ENCODE measurements at regions of chr5 and their contacts with region 1.

Region 1: DNA sequence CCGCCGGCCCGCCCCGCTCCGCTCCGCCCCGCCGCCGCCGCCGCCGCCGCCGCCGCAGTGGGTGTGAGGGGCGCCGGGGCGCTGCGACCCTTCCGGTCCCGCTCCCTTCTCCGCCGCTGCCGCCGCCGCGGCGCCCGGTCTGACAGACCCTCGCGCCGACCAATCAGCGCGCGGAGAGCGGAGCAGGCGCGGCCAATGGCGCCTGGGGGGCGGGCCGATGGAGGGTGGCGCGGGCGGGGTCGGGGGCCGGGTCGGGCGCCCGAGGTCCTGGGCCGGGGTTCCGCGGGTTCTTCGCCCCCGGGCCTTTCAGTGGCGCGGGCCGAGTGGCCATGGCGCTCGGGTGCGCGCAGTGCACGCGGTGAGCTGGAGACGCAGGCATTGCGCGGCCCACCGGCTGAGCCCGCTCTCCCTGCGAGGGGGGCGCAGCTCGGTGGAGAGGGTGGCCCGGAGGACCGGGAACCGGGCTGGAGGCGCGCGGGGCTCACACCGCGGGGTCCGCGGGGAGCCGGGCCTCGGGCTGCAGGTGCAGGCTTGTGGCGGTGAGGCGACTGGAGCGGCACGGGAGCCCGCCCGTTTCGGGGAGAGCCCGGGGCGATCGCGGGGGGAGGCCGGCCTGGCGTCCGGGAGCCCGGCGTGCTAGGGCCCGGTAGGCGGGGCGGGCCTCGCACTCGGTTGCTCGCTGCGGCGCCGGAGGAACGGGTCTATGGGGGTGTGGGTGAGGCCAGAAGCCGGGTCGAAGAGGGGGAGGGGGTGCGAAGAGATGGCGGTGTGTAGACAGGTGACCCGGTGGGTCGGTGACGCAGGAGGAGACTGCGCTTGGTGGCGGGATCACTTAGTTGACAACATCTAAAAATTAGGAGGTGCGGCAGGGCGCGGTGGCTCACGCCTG is at the start of gene MAPK9:
- DNase-seq: peak; percentile 83
- H3K4me3 Mint-ChIP-seq: peak within 1 kb of the TSS; percentile 94
- H3K27ac Mint-ChIP-seq: peak within 1 kb of the TSS; percentile 90
- H3K4me1 Mint-ChIP-seq: peaks cover 32% of the 10 kb centered on the region
- H3K27me3 Mint-ChIP-seq: no peaks in the 10 kb centered on the region
- total RNA-seq, gene MAPK9: 30.8 to 34.4 TPM

Region 2: GRCh38 chr5:179879010-179879689 is 413.0 kb before region 1 on chr5:
- CTCF ChIA-PET with region 1: no interaction called
- intact Hi-C with region 1: no loop called
- DNase-seq: no peak
- H3K4me3 Mint-ChIP-seq: no peak overlapping the region
- H3K27ac Mint-ChIP-seq: no peak overlapping the region
- H3K4me1 Mint-ChIP-seq: no peaks in the 10 kb centered on the region
- H3K27me3 Mint-ChIP-seq: no peaks in the 10 kb centered on the region

Region 3: GRCh38 chr5:180328296-180329137 is 36.3 kb after region 1 on chr5:
- CTCF ChIA-PET with region 1: interaction called, 48 read pairs
- intact Hi-C with region 1: loop called (anchors 1 kb)
- DNase-seq: peak; percentile 93
- H3K4me3 Mint-ChIP-seq: no peak overlapping the region
- H3K27ac Mint-ChIP-seq: no peak overlapping the region
- H3K4me1 Mint-ChIP-seq: no peaks in the 10 kb centered on the region
- H3K27me3 Mint-ChIP-seq: peaks cover 14% of the 10 kb centered on the region

Region 4: DNA sequence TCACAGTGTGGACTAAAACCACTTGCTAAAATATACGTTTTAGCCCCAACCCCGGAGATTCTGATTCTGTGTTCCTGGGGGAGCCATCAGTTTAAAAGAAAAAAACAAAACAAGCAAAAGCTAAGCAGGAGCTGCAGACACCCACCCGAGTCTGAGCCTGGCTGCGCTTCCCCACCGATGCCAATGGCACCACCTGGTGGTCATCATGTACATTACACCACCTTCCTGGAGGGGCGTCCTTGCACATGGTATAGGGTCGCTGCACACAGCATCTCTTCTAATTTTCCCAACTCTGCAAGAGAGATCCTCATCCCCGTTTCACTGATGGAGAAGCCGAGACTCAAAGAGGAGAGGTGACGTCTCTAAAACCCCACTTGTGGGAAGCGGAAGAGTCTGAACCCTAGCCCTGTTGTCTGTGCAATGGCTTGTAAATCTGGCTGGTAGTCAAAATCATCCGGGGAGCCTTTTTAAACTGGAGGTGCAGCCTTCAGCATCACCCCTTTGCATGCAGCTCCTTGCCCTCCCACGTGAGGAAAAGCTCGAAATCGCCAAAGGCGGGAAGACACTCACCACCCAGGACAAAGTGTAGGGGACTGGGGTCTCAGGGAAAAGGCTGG is 178.9 kb after region 1 on chr5:
- CTCF ChIA-PET with region 1: interaction called, 20 read pairs
- intact Hi-C with region 1: loop called (anchors 1 kb)
- DNase-seq: peak; percentile 53
- H3K4me3 Mint-ChIP-seq: no peak overlapping the region
- H3K27ac Mint-ChIP-seq: no peak overlapping the region
- H3K4me1 Mint-ChIP-seq: no peaks in the 10 kb centered on the region
- H3K27me3 Mint-ChIP-seq: peaks cover 2% of the 10 kb centered on the region

Region 5: DNA sequence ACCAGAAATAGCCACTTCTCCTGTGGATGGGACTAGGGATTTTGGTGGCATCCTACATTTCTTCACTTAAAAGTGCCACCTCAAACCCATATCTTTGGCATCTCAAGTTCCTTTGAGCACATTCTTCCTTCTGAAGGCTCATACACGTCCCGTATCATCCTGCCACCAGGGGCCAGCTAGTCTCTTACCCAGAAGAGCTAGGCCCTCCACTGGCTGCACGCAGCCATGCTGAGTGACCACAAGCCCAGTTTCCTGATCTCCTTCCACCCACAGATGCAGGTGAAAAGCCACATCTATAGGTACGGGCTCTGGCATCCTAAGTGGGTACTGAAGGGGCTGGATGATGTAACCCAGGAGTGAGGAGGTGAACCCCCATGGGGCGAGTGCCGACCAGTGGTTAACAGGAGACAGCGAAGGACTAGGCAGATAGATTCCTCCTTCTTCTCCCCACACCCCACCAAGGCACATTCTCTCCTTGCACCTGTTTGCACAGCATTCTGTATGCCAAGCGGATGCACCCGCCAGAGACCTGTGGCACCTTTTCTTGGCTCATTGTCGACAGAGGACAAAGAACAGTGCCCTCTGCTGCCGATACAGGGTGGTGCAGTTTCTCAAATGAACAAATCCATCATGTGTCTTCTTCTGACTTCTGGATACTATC is 313.5 kb after region 1 on chr5:
- CTCF ChIA-PET with region 1: interaction called, 3 read pairs
- intact Hi-C with region 1: loop called (anchors 2 kb)
- DNase-seq: peak; percentile 87
- H3K4me3 Mint-ChIP-seq: no peak overlapping the region
- H3K27ac Mint-ChIP-seq: no peak overlapping the region
- H3K4me1 Mint-ChIP-seq: no peaks in the 10 kb centered on the region
- H3K27me3 Mint-ChIP-seq: no peaks in the 10 kb centered on the region

Measured in activated naive CD4-positive, alpha-beta T cell treated with anti-CD3 and anti-CD28 coated beads for 36 hours (primary cell).